Colonic mucosa (tissue), 4 donors: ENCODE measurements at regions of chr1 and their contacts with region 1.

Region 1: DNA sequence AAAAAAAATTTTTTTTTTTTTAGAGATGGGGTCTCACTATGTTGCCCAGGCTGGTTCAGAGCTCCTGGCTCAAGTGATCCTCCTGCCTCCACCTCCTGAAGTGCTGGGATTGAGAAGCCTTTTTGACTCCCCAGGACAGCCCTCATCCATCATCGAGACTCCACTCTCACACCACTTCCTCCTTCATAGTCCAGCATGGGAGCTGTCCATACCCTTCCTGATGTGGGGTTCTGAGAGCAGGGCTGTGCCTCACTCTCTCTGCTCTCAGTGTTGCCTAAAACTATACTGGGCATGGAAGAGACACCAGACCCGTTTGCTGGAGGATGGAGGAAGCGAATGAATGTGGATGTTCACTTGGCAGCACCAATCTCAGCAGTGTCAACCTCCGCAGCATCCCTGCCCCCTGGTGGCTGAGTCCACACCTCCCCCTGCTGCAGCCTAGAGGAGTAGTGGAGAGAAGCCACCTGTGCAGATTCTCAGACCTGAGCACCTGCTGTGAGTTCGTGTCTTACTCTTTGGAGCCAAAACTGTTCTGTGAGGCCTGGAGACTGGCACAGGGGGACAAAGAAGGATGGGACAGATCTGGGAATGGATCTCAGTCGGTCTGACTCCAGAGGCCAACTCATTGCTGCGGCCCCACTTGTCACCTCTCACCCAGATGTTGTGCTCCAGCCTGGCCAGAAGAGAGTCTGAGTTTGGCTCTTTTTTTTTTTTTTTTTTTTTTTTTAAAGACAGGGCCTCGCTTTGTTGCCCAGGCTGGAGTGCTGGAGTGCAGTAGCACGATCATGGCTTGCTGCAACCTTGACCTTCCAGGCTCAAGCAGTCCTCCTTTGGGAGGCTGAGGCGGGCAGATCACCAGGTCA is 17.7 kb downstream of the TINAGL1 start:
- DNase-seq: peak; percentile 93
- H3K4me3 ChIP-seq: no peak overlapping the region
- H3K27ac ChIP-seq: no peak overlapping the region
- H3K4me1 ChIP-seq: no peaks in the 10 kb centered on the region
- H3K27me3 ChIP-seq: no peaks in the 10 kb centered on the region
- CTCF ChIP-seq: peak; percentile 90

Region 2: GRCh38 chr1:31564134-31564989 is 29.6 kb before region 1 on chr1:
- intact Hi-C with region 1: loop called (anchors 1 kb)
- DNase-seq: peak; percentile 83
- H3K4me3 ChIP-seq: no peak overlapping the region
- H3K27ac ChIP-seq: peak overlapping the region; percentile 11
- H3K4me1 ChIP-seq: peaks cover 7% of the 10 kb centered on the region
- H3K27me3 ChIP-seq: no peaks in the 10 kb centered on the region
- CTCF ChIP-seq: peak; percentile 75